Right cardiac atrium (tissue), 5 donors: ENCODE measurements at regions of chr7 and their contacts with region 1.

Region 1: DNA sequence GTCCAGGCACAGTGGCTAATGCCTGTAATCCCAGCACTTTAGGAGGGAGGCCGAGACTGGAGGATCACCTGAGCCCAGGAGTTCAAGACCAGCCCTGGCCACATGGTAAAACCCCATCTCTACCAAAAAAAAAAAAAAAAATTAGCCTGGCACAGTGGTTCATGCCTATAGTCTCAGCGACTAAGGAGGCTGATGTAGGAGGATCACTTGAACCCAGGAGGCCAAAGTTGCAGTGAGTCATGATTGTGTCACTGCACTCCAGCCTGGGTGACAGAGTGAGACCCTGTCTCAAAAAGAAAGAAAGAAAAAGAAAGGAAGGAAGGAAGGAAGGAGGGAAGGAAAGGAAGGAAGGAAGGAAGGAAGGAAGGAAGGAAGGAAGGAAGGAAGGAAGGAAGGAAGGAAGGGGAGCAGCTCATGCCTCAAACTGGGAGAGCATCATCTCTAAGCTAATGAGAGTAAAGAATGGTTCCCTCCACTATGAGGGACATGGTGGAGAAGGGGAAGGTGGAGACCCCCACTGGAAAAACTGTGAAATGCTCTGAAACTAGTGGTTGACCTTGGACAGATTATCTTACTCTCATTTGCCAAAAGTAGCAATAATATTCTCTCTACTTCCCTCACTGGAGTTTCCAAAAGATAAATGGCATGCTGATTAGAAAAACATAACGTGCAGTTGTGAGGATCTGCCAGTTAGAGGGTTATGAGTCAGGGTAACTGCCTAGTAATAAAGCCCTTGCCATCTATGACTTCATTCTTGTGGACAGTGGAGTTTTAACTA is 16.8 kb downstream of the GIMAP5 start:
- DNase-seq: no peak
- ATAC-seq: peak; percentile 54 to 71
- H3K4me3 ChIP-seq: no peak overlapping the region
- H3K27ac ChIP-seq: peak overlapping the region; percentile 5
- H3K4me1 ChIP-seq: peaks cover 9% of the 10 kb centered on the region
- H3K27me3 ChIP-seq: no peaks in the 10 kb centered on the region

Region 2: GRCh38 chr7:150448789-150449147 is 305.2 kb before region 1 on chr7:
- intact Hi-C with region 1: loop called in 3 of 4 experiments (anchors 2 to 5 kb)
- DNase-seq: peak; percentile 74 to 92 (median 88)
- ATAC-seq: peak; percentile 53 to 56
- H3K4me3 ChIP-seq: no peak overlapping the region
- H3K27ac ChIP-seq: no peak overlapping the region
- H3K4me1 ChIP-seq: peaks cover 5% of the 10 kb centered on the region
- H3K27me3 ChIP-seq: no peaks in the 10 kb centered on the region

Region 3: DNA sequence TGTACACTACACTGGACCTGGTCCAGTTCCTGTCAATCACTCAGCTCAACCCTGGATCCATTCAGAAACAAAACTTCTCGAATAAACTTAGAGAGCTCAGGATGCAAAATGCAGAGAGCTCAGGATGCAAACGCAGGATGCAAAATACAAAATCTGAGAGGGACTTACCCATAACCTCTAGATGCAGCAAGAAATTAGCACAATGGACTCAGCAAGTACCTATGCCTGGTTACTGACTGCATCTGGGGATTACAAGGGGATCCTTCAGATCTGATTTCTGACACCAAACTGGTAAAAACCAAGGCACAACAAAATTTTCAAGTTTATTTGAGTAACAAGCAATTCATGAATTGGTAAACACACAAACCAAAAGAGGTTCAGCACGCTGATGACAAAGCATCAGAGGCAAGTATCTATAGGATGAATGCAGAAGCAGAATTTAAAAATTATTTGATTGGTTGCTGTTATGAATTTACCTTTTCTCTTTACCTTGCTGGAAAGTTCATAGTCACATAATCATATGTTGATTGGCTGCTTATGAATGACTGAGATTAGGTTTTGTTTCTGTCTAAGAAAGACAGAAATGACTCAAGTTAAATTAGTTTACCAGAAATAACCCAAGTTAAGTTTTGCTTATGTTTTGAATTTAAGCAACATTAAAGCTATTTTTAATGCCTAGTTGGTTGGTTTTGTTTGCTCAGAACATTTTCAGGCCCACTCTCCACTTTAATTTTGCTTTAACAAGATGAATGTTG is 133.2 kb before region 1 on chr7:
- intact Hi-C with region 1: loop called in 1 of 4 experiments (anchors 10 kb)
- DNase-seq: no peak
- ATAC-seq: no peak
- H3K4me3 ChIP-seq: no peak overlapping the region
- H3K27ac ChIP-seq: peak overlapping the region; percentile 35
- H3K4me1 ChIP-seq: no peaks in the 10 kb centered on the region
- H3K27me3 ChIP-seq: no peaks in the 10 kb centered on the region